WTC11 (cell line): ENCODE measurements at regions of chr12 and their contacts with region 1.

Region 1: DNA sequence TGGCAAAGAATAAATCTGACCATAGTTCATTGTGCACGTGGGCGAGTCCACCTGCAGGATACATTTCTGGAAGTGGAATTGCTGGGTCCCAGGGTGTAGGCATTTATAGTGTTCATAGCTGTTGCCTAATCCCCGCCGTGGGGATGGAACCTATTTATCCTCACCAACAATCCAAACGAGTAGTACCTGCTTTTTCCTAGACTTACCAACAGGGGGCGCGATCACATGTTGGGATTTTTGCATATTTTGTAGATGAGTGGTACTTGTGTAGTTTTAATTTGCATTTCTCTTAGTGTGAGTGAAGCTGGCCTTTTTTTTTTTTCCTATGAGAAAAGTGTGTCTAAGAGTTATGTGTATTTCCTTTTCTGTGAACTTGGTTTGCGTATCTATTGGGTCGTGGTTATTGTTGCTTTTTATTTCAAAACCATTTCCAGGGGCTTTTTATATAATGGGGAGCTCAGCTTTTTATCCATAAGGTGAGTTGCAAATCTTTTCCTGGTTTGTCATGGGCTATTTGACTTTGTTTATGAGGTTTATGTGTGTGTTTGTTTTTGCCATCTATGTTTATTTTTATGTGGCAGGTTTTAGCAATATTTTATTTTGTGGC is 67.2 kb downstream of the CCDC92 start:
- DNase-seq: peak; percentile 62
- ATAC-seq: peak; percentile 21; the same call in 1 of the 2 replicates
- H3K4me3 Mint-ChIP-seq: no peak overlapping the region
- H3K27ac Mint-ChIP-seq: no peak overlapping the region
- H3K4me1 Mint-ChIP-seq: peaks cover 8% of the 10 kb centered on the region
- H3K27me3 Mint-ChIP-seq: peaks cover 8% of the 10 kb centered on the region
- CTCF ChIP-seq: peak; percentile 81

Region 2: GRCh38 chr12:123822804-123823203 is 82.6 kb before region 1 on chr12:
- CTCF ChIA-PET with region 1: no interaction called
- POLR2A ChIA-PET with region 1: no interaction called
- DNase-seq: no peak
- ATAC-seq: no peak
- H3K4me3 Mint-ChIP-seq: no peak overlapping the region
- H3K27ac Mint-ChIP-seq: no peak overlapping the region
- H3K4me1 Mint-ChIP-seq: no peaks in the 10 kb centered on the region
- H3K27me3 Mint-ChIP-seq: peaks cover 29% of the 10 kb centered on the region
- CTCF ChIP-seq: no peak

Region 3: GRCh38 chr12:123891516-123892179 is 13.8 kb before region 1 on chr12:
- CTCF ChIA-PET with region 1: interaction called, 12 read pairs
- POLR2A ChIA-PET with region 1: no interaction called
- DNase-seq: no peak
- ATAC-seq: no peak; the same call in 1 of the 2 replicates
- H3K4me3 Mint-ChIP-seq: no peak overlapping the region
- H3K27ac Mint-ChIP-seq: no peak overlapping the region
- H3K4me1 Mint-ChIP-seq: peaks cover 12% of the 10 kb centered on the region
- H3K27me3 Mint-ChIP-seq: peaks cover 2% of the 10 kb centered on the region; the same call in 1 of the 2 replicates
- CTCF ChIP-seq: no peak

Region 4: DNA sequence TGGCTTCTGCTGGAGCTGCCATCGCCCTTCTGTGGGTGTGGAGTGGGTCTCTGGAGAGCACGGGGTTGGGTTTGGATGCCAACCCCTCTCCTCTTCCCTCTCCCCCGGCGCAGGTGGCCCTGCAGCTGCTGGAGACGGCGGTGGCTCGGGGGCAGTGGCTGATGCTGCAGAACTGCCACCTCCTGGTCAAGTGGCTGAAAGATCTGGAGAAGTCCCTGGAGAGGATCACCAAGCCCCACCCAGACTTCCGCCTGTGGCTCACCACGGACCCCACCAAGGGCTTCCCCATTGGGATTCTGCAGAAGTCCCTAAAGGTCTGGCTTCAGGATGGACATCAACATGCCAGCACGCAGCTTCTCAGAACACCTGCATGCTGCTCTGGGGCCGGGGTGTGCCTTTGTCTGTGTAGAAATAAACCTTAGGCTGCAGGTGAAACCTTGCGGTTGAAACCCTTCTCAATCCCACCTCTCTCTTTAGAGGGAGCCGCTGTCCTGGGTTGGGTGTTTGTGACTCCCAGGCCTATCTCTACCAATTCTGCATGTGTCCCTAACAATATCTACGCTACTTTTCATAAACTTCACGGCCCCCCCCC is 22.9 kb after region 1 on chr12:
- CTCF ChIA-PET with region 1: interaction called, 12 read pairs
- POLR2A ChIA-PET with region 1: no interaction called
- DNase-seq: no peak
- ATAC-seq: no peak; the same call in 1 of the 2 replicates
- H3K4me3 Mint-ChIP-seq: no peak overlapping the region
- H3K27ac Mint-ChIP-seq: no peak overlapping the region
- H3K4me1 Mint-ChIP-seq: no peaks in the 10 kb centered on the region
- H3K27me3 Mint-ChIP-seq: peaks cover 7% of the 10 kb centered on the region; the same call in 1 of the 2 replicates
- CTCF ChIP-seq: no peak

Region 5: GRCh38 chr12:123986374-123986965 is 81.0 kb after region 1 on chr12:
- CTCF ChIA-PET with region 1: interaction called, 10 read pairs
- POLR2A ChIA-PET with region 1: no interaction called
- DNase-seq: no peak
- ATAC-seq: no peak
- H3K4me3 Mint-ChIP-seq: no peak overlapping the region
- H3K27ac Mint-ChIP-seq: no peak overlapping the region
- H3K4me1 Mint-ChIP-seq: 0 out of 2 replicates have a peak, but pooled peaks cover 3% of the 10 kb centered on the region
- H3K27me3 Mint-ChIP-seq: no peaks in the 10 kb centered on the region
- CTCF ChIP-seq: no peak